ENCODE measurements at regions of chr13 and their contacts with region 1.

Region 1: GRCh38 chr13:39263033-39263432 is 224.8 kb downstream of the NHLRC3 start:
- DNase-seq: peak; percentile 37
- ATAC-seq: peak; percentile 73 to 83

Region 2: DNA sequence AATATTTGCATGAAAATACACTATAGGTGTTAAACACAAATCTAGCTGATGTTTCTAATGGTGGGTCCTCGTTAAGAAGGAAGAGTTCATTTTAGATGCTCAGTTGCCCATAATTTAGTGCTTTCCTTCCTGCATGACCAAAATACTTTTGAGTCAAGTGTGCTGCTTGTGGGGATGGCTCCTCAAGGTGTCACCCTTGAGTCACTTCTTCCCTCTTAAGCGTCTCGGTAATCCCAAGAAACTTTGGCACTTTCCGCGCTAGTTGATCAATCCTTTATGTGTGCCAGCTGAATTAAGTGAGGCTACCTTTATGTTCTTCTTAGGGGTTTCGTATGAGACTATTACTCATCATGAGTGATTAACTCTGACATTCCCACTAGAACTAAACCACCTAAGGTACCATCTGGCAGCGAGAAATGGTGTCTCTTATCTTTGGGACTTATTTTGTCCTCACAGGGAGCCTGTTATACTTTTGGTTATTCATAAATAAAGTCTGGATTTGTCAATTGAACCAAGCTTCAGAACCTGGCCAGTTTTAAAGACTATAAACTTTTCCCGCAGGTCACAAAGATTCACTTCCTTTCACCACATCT is 118.0 kb before region 1 on chr13:
- intact Hi-C with region 1: loop called in 1 of 2 experiments (anchors 1 kb)
- DNase-seq: peak; percentile 46
- ATAC-seq: peak; percentile 71 to 79

Region 3: GRCh38 chr13:39516096-39516495 is 253.1 kb after region 1 on chr13:
- intact Hi-C with region 1: no loop called
- DNase-seq: peak; percentile 25
- ATAC-seq: peak; percentile 91